Panc1 (cell line): ENCODE measurements at regions of chr16 and their contacts with region 1.

Region 1: DNA sequence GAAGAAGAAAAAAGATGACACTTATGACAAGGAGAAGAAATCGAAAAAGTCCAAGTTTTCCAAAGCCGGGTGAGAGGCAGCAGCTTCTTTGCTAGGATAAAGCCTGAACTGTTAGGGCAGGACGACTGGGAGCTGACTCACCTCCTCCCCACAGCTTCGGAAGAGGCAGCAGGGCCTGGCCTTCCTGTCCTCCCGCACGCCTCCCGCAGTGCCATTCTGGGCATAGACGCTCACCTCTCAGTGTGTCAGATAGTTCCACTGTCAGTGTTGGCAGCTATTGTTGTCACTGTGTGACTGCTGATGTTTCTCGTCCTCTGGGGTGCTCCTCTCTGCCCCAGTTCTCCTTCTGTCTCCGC is 12.6 kb downstream of the UBN1 start:
- DNase-seq: no peak
- ATAC-seq: peak; percentile 76
- H3K4me3 ChIP-seq: no peak overlapping the region
- H3K27ac ChIP-seq: no peak overlapping the region
- H3K4me1 ChIP-seq: no peaks in the 10 kb centered on the region; the same call in 1 of the 2 replicates
- H3K27me3 ChIP-seq: no peaks in the 10 kb centered on the region
- CTCF ChIP-seq: no peak

Region 2: GRCh38 chr16:4640572-4641305 is 219.1 kb before region 1 on chr16:
- CTCF ChIA-PET with region 1: no interaction called
- POLR2A ChIA-PET with region 1: interaction called, 11 read pairs
- in situ Hi-C with region 1: no loop called
- intact Hi-C with region 1: no loop called
- DNase-seq: no peak
- ATAC-seq: peak; percentile 27; the same call in 1 of the 2 replicates
- H3K4me3 ChIP-seq: no peak overlapping the region
- H3K27ac ChIP-seq: no peak overlapping the region
- H3K4me1 ChIP-seq: no peaks in the 10 kb centered on the region
- H3K27me3 ChIP-seq: no peaks in the 10 kb centered on the region
- CTCF ChIP-seq: no peak

Region 3: DNA sequence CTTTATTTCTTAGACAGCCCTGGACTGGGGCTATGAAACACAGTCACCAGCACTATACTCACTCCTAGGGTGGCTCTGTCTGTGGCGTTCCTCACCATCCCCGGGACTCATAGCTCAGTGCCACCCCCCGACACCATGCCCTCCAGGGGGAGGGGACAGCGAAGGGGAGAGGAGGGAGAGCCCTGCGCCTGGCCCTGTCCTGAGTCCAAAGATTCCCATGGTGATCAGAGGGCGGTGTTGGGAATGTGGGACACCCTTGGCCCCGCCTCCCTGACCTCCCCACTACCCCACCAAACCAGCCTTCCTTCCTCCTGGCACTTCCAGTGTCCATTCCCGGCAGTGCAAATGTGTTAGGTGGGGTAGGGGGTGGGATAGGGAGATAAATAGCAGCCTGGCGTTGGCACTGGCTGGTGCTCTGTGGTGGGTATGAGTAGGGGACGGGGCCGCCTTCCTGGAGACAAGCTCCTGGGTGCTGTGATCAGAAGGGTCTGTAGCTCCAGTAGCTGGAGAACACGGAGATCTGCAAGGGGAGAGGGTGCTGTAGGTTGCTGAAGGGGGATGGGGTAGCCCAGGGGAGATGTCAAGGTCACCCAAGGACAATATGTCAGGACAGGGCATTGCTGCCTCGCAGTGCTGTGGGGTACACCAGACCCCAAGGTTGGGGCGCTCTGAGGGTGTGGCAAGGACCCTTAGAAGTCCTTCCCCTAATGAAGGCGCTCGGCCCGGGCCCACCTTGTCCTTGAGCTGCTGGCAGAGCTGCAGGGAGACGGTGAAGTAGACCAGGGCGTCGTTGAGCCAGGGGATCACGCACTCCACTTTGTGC is 62.7 kb before region 1 on chr16:
- CTCF ChIA-PET with region 1: no interaction called
- POLR2A ChIA-PET with region 1: interaction called, 15 read pairs
- in situ Hi-C with region 1: no loop called
- intact Hi-C with region 1: no loop called
- DNase-seq: no peak
- ATAC-seq: no peak
- H3K4me3 ChIP-seq: no peak overlapping the region
- H3K27ac ChIP-seq: no peak overlapping the region
- H3K4me1 ChIP-seq: peaks cover 12% of the 10 kb centered on the region
- H3K27me3 ChIP-seq: no peaks in the 10 kb centered on the region
- CTCF ChIP-seq: no peak

Region 4: GRCh38 chr16:4814542-4815173 is 45.2 kb before region 1 on chr16:
- CTCF ChIA-PET with region 1: no interaction called
- POLR2A ChIA-PET with region 1: no interaction called
- in situ Hi-C with region 1: loop called (anchors 10 kb)
- intact Hi-C with region 1: no loop called
- DNase-seq: no peak
- ATAC-seq: 0 out of 2 replicates have a peak, but pooled peaks have one; percentile 47
- H3K4me3 ChIP-seq: no peak overlapping the region
- H3K27ac ChIP-seq: no peak overlapping the region
- H3K4me1 ChIP-seq: no peaks in the 10 kb centered on the region
- H3K27me3 ChIP-seq: no peaks in the 10 kb centered on the region
- CTCF ChIP-seq: no peak

Region 5: DNA sequence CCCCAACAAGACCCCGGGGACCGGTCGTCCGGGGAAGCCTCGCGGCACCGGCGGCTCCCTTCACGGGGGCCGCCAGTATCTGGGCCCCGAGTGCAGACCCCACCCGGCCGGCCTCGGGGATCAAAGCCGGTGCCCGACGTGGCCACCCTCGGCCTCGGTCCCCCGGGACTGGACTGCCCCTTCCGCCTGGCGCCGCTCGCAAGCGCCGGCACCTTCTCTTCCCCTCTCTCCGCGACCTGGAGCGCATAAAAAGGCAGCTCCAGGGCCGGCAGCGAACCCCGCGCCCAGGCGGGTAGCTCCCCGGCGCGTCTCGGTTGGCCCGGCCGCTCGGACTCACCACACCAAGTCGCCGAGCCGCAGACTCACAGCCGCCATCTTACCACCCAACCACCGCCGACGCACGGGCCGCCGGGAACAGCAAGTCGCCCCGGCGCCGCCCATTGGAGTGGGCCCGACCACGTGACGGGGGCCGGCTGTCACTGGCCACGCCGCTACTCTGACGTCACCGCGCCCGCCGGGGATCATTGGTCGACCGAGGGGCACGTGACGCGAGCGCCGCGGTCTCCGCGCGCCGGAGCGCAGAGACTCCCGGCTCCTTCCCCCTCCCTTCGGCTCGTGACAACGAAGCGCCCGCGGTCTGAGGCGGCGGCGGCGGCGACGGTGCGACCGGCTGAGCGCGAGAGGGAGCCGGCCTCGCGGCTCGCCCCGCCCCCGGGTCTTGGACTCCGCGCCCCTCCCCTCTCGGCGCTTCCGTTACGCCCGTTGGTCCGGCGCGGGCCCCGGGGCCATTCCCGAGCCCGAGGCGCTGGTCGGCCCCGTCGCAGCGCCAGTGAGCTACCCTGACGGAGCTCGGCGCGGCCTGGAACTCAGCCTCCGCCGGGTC is 12.7 kb before region 1 on chr16 and contains the starts of genes GLYR1 and UBN1:
- CTCF ChIA-PET with region 1: no interaction called
- POLR2A ChIA-PET with region 1: no interaction called
- in situ Hi-C with region 1: no loop called
- intact Hi-C with region 1: no loop called
- DNase-seq: peak; percentile 71
- ATAC-seq: peak; percentile 95
- H3K4me3 ChIP-seq: peak within 1 kb of the TSS; percentile 63 to 96
- H3K27ac ChIP-seq: peak within 1 kb of the TSS; percentile 84
- H3K4me1 ChIP-seq: peaks cover 22% of the 10 kb centered on the region
- H3K27me3 ChIP-seq: no peaks in the 10 kb centered on the region
- CTCF ChIP-seq: no peak
- total RNA-seq, gene GLYR1: 111 TPM
- total RNA-seq, gene UBN1: 63.1 TPM

Region 6: GRCh38 chr16:4968879-4969456 is 109.1 kb after region 1 on chr16:
- CTCF ChIA-PET with region 1: no interaction called
- POLR2A ChIA-PET with region 1: no interaction called
- in situ Hi-C with region 1: no loop called
- intact Hi-C with region 1: no loop called
- DNase-seq: no peak
- ATAC-seq: no peak
- H3K4me3 ChIP-seq: no peak overlapping the region
- H3K27ac ChIP-seq: no peak overlapping the region
- H3K4me1 ChIP-seq: no peaks in the 10 kb centered on the region
- H3K27me3 ChIP-seq: peaks cover 2% of the 10 kb centered on the region; the same call in 1 of the 2 replicates
- CTCF ChIP-seq: no peak